GM10248 (cell line): ENCODE measurements at regions of chrX and their contacts with region 1.

Region 1: DNA sequence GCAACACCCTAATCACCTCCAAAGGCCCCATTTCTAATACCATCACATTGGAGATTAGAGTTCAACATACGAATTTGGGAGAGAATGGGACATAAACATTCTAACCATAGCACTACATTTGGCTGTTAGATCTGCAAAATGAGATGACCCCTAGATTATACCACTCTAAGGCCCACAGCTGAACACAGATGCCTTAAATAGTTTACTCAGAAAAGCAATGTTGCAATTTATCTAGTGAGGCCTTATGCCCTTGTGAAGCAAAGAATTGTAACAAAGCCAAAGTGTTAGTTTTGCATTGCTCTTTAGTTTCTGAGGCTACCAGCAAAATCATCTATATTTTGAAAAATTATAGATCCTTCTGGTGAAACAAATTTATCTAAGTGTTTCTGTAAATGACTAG is 31.6 kb upstream of the ARHGEF6 start:
- DNase-seq: no peak
- CTCF ChIP-seq: no peak

Region 2: GRCh38 chrX:136708348-136708747 is 103.9 kb before region 1 on chrX:
- CTCF ChIA-PET with region 1: no interaction called
- POLR2A ChIA-PET with region 1: interaction called, 11 read pairs
- DNase-seq: peak; percentile 11
- CTCF ChIP-seq: peak; percentile 36

Region 3: GRCh38 chrX:136778916-136779315 is 33.4 kb before region 1 on chrX:
- CTCF ChIA-PET with region 1: no interaction called
- POLR2A ChIA-PET with region 1: no interaction called
- DNase-seq: no peak
- CTCF ChIP-seq: no peak